Adrenal gland (tissue), 19 donors: ENCODE measurements at regions of chr3 and their contacts with region 1.

Region 1: DNA sequence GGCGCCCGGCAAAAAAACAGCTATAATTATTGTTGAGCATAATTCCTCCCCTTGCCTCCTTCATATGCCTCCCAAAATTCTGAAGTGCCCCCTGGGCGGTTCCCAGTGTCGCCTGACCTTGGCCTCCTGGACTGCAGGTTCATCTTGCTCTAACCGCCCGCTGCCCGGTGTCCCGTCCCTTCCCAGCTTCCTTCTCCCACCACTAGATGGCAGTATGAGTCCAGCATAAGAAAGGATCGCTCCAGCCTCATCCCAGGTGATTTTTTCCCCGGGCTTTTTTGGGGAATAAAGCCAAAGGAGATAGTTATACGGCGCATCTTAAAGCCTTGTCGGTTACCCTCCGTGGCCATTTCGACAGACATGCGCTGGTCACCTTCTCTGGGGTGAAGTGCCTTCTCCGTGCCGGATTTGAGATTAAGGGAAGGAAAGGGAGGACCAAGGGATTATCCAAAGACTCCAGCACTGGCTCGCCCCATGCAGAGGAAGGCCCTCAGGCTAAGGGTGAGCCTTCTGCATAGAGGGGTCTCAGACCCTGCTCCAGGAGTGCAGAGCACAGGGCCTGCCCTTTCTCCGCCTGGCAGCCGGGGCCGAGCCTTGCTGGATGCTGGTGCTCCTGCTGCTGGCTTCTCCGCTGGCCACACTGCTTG is 45.8 kb upstream of the TRA2B start:
- DNase-seq: peak; percentile 63 to 92 (median 77)
- H3K4me3 ChIP-seq: no peak overlapping the region
- H3K27ac ChIP-seq: no peak overlapping the region
- H3K4me1 ChIP-seq: peaks cover 0 to 5% of the 10 kb centered on the region in 2 donors
- H3K27me3 ChIP-seq: no peaks in the 10 kb centered on the region
- CTCF ChIP-seq: peak; percentile 82 to 96 (median 94)
- POLR2A ChIP-seq: no peak

Region 2: DNA sequence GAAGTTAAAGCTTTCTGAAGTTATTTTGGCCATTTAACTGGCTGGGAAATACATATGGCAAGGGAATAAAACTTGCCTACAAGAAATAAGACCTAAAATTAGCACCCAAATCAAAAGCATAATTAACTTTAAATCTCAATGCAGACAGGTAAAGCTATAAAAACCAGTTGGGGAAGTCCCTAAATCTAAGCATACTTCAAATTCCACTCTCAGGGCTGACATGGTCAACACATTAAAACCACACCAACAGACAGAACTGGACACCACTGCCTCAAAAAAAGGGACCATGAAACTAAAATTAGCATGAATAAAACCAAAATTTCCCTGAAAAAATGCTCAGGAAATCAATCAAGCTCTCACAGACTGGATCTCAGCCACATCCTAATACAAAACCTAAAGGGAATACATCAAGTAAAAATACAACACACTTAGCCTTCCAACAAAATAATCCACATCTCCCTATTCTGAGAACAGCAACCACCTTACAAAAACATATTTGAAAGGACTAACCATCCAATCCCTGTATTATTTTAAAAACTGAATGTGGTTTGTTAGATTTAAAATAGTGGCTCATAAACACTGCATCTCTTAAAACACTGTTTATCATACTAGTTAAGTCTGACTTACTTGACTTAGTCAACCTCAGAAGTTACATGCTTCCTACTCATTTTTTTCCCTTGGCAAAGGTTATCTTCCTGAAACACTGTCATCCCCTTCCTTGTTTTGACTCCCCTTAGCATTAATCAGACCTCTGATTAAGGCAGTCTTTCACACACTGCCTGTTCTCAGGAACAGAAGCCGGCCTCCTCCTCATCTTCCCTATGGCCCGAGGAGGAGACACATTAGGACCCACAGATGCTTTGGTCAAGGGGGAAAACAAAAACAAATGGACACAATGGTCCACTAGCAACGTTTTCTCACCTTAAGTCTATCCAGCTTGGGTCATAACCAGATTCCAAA is 54.1 kb before region 1 on chr3:
- intact Hi-C with region 1: no loop called
- DNase-seq: no peak
- H3K4me3 ChIP-seq: peak overlapping the region in 1 of 4 donors; percentile 21
- H3K27ac ChIP-seq: peak overlapping the region in 3 of 5 donors; percentile 18 to 30 (median 28)
- H3K4me1 ChIP-seq: peaks cover 82 to 100% of the 10 kb centered on the region in 2 donors
- H3K27me3 ChIP-seq: no peaks in the 10 kb centered on the region
- CTCF ChIP-seq: no peak
- POLR2A ChIP-seq: no peak

Region 3: DNA sequence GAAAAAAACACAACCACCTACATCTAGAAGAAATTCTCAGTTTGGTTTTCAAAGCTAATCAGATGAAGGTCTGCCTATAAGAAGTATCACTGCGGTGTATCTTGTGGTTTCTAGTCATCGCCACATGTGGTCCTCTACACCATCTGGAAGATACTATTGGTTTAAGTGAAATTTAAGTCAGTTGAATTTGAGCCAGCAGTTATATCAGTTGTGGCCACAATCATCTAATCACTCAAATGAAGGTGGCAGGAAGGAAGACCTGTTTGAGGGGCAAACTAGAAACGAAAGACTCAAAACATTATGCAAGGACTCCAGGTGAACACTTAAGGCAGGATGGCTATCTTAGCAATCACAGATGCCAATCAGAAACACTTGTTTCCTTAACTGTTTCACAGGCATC is 76.6 kb after region 1 on chr3:
- intact Hi-C with region 1: no loop called
- DNase-seq: no peak
- H3K4me3 ChIP-seq: no peak overlapping the region
- H3K27ac ChIP-seq: no peak overlapping the region
- H3K4me1 ChIP-seq: peaks cover 0 to under 1% of the 10 kb centered on the region in 2 donors
- H3K27me3 ChIP-seq: no peaks in the 10 kb centered on the region
- CTCF ChIP-seq: no peak
- POLR2A ChIP-seq: no peak

Region 4: DNA sequence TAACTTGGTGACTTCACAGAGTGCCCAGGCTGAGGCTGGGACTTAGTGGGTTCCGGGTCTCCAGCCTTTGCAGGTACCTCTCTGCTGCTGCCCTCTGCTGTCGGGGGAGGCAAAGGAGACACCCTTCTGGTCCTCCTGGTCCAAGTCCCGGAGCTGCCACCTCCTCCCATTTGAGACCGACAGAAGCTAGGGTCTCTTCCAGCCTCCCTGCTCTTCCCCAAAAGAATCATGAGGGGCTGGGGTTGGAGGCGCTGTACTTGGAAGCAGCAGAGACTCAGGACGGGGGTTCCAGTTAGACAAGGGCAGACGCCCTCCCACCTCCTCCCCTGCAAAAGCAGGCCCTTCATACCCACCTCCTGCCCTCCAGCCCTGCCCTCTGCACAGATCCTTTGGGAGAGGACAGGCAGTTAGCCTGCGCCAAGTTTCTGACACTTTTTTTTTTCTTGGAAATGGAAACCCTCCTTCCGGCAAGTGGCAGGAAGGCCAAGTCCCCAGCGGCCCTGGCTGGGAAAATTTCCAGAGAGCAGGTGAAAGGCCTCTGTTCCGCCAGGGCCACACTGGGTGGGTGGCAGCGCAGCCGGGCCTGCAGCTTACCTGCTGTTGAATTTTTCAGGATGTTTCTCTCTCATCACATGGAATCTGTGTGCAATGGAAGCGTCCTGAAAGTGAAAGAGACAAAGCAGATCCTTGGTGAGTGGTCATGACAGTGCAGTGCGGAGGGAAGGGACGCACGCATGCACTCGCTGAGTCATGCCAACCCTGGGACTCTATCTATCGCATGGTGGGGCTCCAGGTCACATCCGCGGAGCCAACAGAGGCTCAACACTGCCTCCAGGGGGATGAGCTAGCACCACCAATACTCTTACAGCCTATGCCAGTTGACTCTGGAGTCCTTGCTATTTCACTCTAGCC is 258.5 kb after region 1 on chr3:
- intact Hi-C with region 1: loop called (anchors 5 kb)
- DNase-seq: peak; percentile 85 to 97 (median 96)
- H3K4me3 ChIP-seq: peak overlapping the region in 3 of 4 donors; percentile 22 to 48 (median 36)
- H3K27ac ChIP-seq: peak overlapping the region; percentile 74 to 93 (median 91)
- H3K4me1 ChIP-seq: peaks cover 5 to 26% of the 10 kb centered on the region in 2 donors
- H3K27me3 ChIP-seq: no peaks in the 10 kb centered on the region
- CTCF ChIP-seq: peak; percentile 40 to 84 (median 77)
- POLR2A ChIP-seq: peak; percentile 23 to 77

Region 5: DNA sequence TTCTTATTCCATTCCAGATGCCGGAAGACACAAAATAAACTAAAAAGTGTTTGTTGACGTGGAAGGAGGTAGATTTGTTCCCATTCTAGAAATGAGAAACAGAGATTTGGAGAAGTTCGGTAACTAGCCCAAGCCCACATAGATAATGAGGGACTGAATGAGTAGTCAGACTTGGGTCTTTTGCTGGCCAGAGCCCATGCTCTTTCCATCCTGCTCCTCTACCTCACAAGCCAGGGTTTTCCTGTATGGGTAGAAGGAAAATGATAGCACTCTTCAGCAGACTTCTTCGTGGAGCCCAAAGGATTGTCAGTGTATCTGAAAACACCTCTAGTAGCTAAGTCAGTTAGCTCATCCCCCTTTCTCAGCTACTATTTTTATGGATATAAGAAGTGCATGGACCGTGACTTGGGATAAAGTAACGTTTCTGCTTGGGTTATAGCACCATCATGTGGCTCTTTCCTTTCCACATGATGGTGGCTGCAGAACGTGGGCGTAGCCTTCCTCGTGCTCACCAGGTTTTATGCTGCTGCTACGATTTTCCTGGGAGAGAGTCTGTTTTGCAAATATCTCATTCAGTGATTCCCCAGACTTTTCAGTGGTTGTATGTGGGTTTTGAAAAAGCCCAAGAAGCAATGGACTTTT is 293.8 kb after region 1 on chr3:
- intact Hi-C with region 1: loop called (anchors 5 kb)
- DNase-seq: peak; percentile 34 to 64 (median 50)
- H3K4me3 ChIP-seq: no peak overlapping the region
- H3K27ac ChIP-seq: no peak overlapping the region
- H3K4me1 ChIP-seq: no peaks in the 10 kb centered on the region
- H3K27me3 ChIP-seq: no peaks in the 10 kb centered on the region
- CTCF ChIP-seq: peak; percentile 26 to 80 (median 68)
- POLR2A ChIP-seq: no peak

Region 6: DNA sequence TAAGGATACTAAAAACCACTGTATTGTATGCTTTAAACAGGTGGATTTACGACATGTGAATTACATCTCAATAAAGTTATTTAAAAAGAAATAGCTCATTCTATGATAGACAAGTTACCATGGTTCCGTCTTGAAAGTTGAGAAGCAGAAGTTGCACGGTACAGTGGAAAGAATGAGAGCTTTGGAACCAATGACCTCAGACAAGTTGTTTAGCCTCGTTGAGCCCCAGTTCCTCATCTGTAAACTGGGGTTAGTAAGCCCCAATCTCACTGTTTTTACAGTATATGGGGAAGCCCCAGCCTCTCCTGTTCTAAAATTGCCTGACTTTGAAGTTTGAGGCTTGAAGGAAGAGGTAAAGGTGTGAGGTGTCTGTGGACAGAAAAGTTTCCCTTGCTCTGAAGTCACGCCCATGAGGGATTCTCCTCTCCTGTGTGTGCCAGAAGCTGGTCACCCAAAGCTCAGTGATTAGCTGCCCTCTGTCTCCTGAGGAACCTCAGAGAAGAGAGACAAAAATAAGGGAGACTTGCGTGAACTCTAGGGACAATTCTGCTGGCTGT is 550.6 kb after region 1 on chr3:
- intact Hi-C with region 1: loop called in 1 of 2 experiments (anchors 5 kb)
- DNase-seq: no peak
- H3K4me3 ChIP-seq: no peak overlapping the region
- H3K27ac ChIP-seq: no peak overlapping the region
- H3K4me1 ChIP-seq: peaks cover 0 to 14% of the 10 kb centered on the region in 2 donors
- H3K27me3 ChIP-seq: no peaks in the 10 kb centered on the region
- CTCF ChIP-seq: no peak
- POLR2A ChIP-seq: no peak

Region 7: GRCh38 chr3:186540221-186540834 is 556.7 kb after region 1 on chr3:
- intact Hi-C with region 1: loop called (anchors 5 kb)
- DNase-seq: peak; percentile 74 to 93 (median 80)
- H3K4me3 ChIP-seq: peak overlapping the region in 1 of 4 donors; percentile 14
- H3K27ac ChIP-seq: no peak overlapping the region
- H3K4me1 ChIP-seq: peaks cover 9 to 34% of the 10 kb centered on the region in 2 donors
- H3K27me3 ChIP-seq: no peaks in the 10 kb centered on the region
- CTCF ChIP-seq: peak; percentile 66 to 88 (median 82)
- POLR2A ChIP-seq: no peak

Region 8: GRCh38 chr3:186617038-186617946 is 633.7 kb after region 1 on chr3:
- intact Hi-C with region 1: loop called in 1 of 2 experiments (anchors 10 kb)
- DNase-seq: peak; percentile 74 to 91 (median 88)
- H3K4me3 ChIP-seq: no peak overlapping the region
- H3K27ac ChIP-seq: no peak overlapping the region
- H3K4me1 ChIP-seq: no peaks in the 10 kb centered on the region
- H3K27me3 ChIP-seq: no peaks in the 10 kb centered on the region
- CTCF ChIP-seq: peak; percentile 72 to 86 (median 80)
- POLR2A ChIP-seq: no peak